ENCODE measurements at regions of chr15 and their contacts with region 1.

Region 1: DNA sequence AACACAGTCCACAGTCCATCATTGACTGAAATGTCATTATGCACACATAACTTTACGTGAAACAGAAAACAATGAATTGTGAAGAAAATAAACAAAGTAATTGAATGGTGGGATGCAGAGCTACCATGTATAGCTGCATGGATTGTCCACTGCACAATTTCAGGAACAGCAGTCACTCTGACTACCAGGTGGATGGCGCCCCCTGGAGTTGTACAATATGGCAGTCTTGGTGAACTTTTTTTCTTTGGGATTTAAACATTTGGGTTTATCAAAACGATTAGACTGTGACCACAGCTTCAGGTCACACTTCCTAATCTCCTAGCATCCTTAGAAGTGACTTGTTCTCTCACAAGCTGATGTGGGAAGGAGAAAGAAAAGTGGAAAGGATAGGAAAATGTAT is 48.9 kb upstream of the TCF12 start:
- DNase-seq: no peak
- ATAC-seq: no peak
- H3K4me3 ChIP-seq: no peak overlapping the region
- H3K27ac ChIP-seq: no peak overlapping the region
- H3K4me1 ChIP-seq: no peaks in the 10 kb centered on the region
- H3K27me3 ChIP-seq: no peaks in the 10 kb centered on the region
- CTCF ChIP-seq: peak; percentile 43 to 53 (median 48); a peak in 5 of 6 replicates
- EP300 ChIP-seq: no peak
- POLR2A ChIP-seq: no peak
- RAD21 ChIP-seq: peak; percentile 73

Region 2: GRCh38 chr15:56491110-56491722 is 378.4 kb before region 1 on chr15:
- CTCF ChIA-PET with region 1: interaction called, 19 read pairs
- POLR2A ChIA-PET with region 1: no interaction called
- RAD21 ChIA-PET with region 1: interaction called, 8 read pairs
- SMC1A ChIA-PET with region 1: interaction called, 17 read pairs
- in situ Hi-C with region 1: loop called (anchors 5 kb)
- intact Hi-C with region 1: loop called (anchors 1 kb)
- DNase-seq: peak; percentile 28
- ATAC-seq: peak; percentile 94
- H3K4me3 ChIP-seq: no peak overlapping the region
- H3K27ac ChIP-seq: no peak overlapping the region
- H3K4me1 ChIP-seq: no peaks in the 10 kb centered on the region
- H3K27me3 ChIP-seq: no peaks in the 10 kb centered on the region
- CTCF ChIP-seq: peak; percentile 89 to 94 (median 92)
- EP300 ChIP-seq: no peak
- POLR2A ChIP-seq: no peak
- RAD21 ChIP-seq: peak; percentile 86

Region 3: GRCh38 chr15:56496635-56497034 is 372.9 kb before region 1 on chr15:
- CTCF ChIA-PET with region 1: interaction called, 19 read pairs
- POLR2A ChIA-PET with region 1: no interaction called
- RAD21 ChIA-PET with region 1: interaction called, 8 read pairs
- SMC1A ChIA-PET with region 1: interaction called, 17 read pairs
- in situ Hi-C with region 1: loop called (anchors 5 kb)
- intact Hi-C with region 1: loop called (anchors 1 kb)
- DNase-seq: peak; percentile 31
- ATAC-seq: peak; percentile 95
- H3K4me3 ChIP-seq: no peak overlapping the region
- H3K27ac ChIP-seq: no peak overlapping the region
- H3K4me1 ChIP-seq: no peaks in the 10 kb centered on the region
- H3K27me3 ChIP-seq: no peaks in the 10 kb centered on the region; a peak in 1 of 4 replicates
- CTCF ChIP-seq: peak; percentile 59 to 66 (median 65); a peak in 5 of 6 replicates
- EP300 ChIP-seq: no peak
- POLR2A ChIP-seq: no peak
- RAD21 ChIP-seq: peak; percentile 81

Region 4: GRCh38 chr15:56821721-56822425 is 47.7 kb before region 1 on chr15:
- CTCF ChIA-PET with region 1: interaction called, 26 read pairs
- POLR2A ChIA-PET with region 1: no interaction called
- RAD21 ChIA-PET with region 1: interaction called, 4 read pairs
- SMC1A ChIA-PET with region 1: interaction called, 7 read pairs
- in situ Hi-C with region 1: no loop called
- intact Hi-C with region 1: loop called (anchors 1 kb)
- DNase-seq: no peak
- ATAC-seq: peak; percentile 98
- H3K4me3 ChIP-seq: no peak overlapping the region
- H3K27ac ChIP-seq: no peak overlapping the region
- H3K4me1 ChIP-seq: no peaks in the 10 kb centered on the region
- H3K27me3 ChIP-seq: no peaks in the 10 kb centered on the region; a peak in 1 of 4 replicates
- CTCF ChIP-seq: peak; percentile 65 to 67 (median 66)
- EP300 ChIP-seq: no peak
- POLR2A ChIP-seq: no peak
- RAD21 ChIP-seq: peak; percentile 88

Region 5: GRCh38 chr15:57100136-57100539 is 230.6 kb after region 1 on chr15:
- CTCF ChIA-PET with region 1: no interaction called
- POLR2A ChIA-PET with region 1: no interaction called
- RAD21 ChIA-PET with region 1: no interaction called
- SMC1A ChIA-PET with region 1: no interaction called
- in situ Hi-C with region 1: no loop called
- intact Hi-C with region 1: no loop called
- DNase-seq: no peak
- ATAC-seq: peak; percentile 72
- H3K4me3 ChIP-seq: no peak overlapping the region
- H3K27ac ChIP-seq: peak overlapping the region; percentile 55
- H3K4me1 ChIP-seq: peaks cover 19% of the 10 kb centered on the region
- H3K27me3 ChIP-seq: no peaks in the 10 kb centered on the region
- CTCF ChIP-seq: no peak
- EP300 ChIP-seq: no peak
- POLR2A ChIP-seq: no peak
- RAD21 ChIP-seq: no peak